IMR-90 (cell line): ENCODE measurements at regions of chr17 and their contacts with region 1.

Region 1: DNA sequence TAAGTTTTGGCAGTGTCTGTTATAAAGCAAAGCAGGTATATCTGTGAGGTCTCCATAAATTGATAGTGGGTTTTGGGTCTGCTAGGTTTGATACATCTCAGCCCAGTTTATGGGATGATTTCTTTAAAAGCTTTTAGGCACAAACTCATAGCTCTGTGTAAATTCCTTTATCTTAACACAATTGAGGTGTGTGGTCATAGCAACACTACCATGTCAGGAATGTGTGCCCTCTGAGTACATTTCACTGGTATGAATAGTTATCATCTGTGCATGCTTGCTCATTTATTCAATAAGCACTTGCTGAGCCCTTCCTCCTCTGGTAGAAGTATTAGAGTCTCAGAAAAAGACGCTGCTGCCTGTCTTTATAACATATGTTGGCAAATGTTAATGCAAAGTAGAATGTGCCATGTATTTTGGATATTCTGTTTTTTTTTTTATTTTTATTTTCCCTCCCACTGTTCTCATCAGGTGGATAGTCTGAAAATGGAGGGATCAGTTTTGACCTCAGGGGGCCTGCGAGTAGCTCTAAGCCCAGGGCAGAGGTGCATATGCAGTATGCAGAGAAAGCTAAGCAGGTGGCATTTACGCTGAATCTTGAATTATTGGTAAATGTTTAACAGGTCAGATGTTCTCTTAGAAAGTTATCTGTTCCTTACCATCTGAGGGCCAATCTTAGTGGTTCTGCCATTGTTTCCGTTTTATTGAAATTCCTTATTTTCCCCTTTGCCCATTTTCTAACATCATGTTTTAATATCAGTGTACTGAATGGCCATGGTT is 90.7 kb downstream of the WNT3 start:
- DNase-seq: peak; percentile 90
- ATAC-seq: peak; percentile 94
- H3K4me3 ChIP-seq: no peak overlapping the region
- H3K27ac ChIP-seq: no peak overlapping the region
- H3K4me1 ChIP-seq: peaks cover 8% of the 10 kb centered on the region; the same call in 1 of the 2 replicates
- H3K27me3 ChIP-seq: no peaks in the 10 kb centered on the region
- CTCF ChIP-seq: no peak
- POLR2A ChIP-seq: no peak
- RAD21 ChIP-seq: no peak

Region 2: GRCh38 chr17:46715951-46716350 is 11.8 kb before region 1 on chr17:
- CTCF ChIA-PET with region 1: interaction called, 3 read pairs
- POLR2A ChIA-PET with region 1: no interaction called
- dilution Hi-C with region 1: no loop called
- in situ Hi-C with region 1: no loop called
- intact Hi-C with region 1: loop called (anchors 1 kb)
- DNase-seq: no peak
- ATAC-seq: no peak
- H3K4me3 ChIP-seq: no peak overlapping the region
- H3K27ac ChIP-seq: no peak overlapping the region
- H3K4me1 ChIP-seq: no peaks in the 10 kb centered on the region
- H3K27me3 ChIP-seq: no peaks in the 10 kb centered on the region
- CTCF ChIP-seq: no peak
- POLR2A ChIP-seq: no peak
- RAD21 ChIP-seq: no peak

Region 3: DNA sequence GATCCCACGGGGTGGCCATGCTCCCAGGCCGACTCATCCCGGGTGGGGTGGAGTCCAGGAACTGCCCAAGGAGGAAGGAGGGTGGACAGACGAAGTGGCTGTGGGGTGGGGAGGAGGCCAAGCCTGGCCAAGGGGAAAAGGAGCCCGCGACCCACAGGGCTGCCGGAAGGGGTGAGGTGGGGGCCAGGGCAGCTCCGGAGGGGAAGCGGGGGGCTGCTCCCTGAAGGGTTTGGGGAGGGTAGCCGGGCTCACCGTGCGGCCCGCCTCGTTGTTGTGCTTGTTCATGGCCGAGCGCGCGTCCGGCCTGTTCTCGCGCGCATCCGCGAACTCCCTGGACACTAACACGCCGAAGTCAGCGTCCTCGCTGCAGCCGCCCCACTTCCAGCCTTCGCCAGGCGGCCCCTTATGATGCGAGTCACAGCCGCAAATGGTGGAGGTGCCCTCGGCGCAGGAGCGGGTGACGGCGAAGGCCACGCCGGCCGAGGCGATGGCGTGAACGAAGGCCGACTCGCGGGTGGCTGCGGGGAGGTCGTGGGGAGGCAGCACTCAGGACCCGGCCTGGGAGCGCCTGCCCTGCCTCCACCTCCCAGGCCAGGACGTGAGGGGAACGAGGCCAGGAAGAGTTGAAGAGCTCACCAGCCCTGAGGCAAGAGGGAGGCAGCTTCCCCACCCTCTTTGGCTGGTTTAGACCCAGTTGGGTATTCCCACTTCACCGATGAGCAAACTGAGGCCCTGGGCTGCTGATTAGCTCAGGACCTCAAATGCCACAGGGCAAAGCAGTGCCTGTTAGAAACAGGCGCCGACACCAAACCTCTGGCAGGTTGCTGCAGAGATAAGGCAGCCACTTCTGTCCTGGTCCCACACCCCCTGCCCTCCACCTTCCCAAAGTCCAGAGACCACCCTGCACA is 42.0 kb after region 1 on chr17:
- CTCF ChIA-PET with region 1: no interaction called
- POLR2A ChIA-PET with region 1: no interaction called
- dilution Hi-C with region 1: no loop called
- in situ Hi-C with region 1: no loop called
- intact Hi-C with region 1: no loop called
- DNase-seq: no peak
- ATAC-seq: no peak
- H3K4me3 ChIP-seq: no peak overlapping the region
- H3K27ac ChIP-seq: no peak overlapping the region
- H3K4me1 ChIP-seq: peaks cover 9% of the 10 kb centered on the region
- H3K27me3 ChIP-seq: no peaks in the 10 kb centered on the region
- CTCF ChIP-seq: no peak
- POLR2A ChIP-seq: no peak
- RAD21 ChIP-seq: no peak

Region 4: DNA sequence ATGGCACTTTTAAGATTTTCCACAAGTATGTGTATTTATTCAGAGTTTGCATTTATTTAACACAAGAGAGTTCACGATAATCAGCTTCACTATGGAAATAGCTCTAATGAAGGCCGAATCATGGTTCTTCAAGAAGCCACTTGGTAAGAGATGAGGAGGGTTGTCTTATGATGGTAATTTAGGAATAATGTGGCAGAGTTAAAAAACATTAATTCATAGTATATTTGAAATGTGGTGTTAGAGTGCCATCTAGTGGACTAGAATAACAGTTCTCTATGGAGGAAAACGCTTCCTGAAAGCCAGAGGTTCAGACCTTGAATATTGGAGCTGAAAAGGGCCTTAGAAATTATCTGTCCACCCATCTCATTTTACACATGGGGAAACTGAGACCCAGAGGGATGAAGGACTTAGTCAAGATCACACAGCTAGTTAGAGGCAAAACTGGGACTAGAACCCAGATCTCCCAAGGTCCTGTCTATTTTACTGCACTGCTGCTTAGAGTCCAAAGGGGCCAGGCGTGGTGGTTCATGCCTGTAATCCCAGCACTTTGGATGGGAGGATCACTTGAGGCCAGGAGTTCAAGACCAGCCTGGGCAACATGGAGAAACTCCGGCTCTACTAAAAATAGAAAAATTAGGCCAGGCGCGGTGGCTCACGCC is 888.1 kb after region 1 on chr17:
- CTCF ChIA-PET with region 1: no interaction called
- POLR2A ChIA-PET with region 1: no interaction called
- dilution Hi-C with region 1: no loop called
- in situ Hi-C with region 1: no loop called
- intact Hi-C with region 1: no loop called
- DNase-seq: peak; percentile 62
- ATAC-seq: peak; percentile 58
- H3K4me3 ChIP-seq: no peak overlapping the region
- H3K27ac ChIP-seq: no peak overlapping the region; the same call in 1 of the 2 replicates
- H3K4me1 ChIP-seq: peaks cover 11% of the 10 kb centered on the region
- H3K27me3 ChIP-seq: no peaks in the 10 kb centered on the region
- CTCF ChIP-seq: peak; percentile 71
- POLR2A ChIP-seq: no peak
- RAD21 ChIP-seq: peak; percentile 61